ENCODE measurements at regions of chr1 and their contacts with region 1.

Region 1: GRCh38 chr1:224356685-224357625 is at the start of gene CNIH4:
- DNase-seq: peak; percentile 96
- H3K27ac ChIP-seq: peak within 1 kb of the TSS; percentile 89
- CTCF ChIP-seq: no peak

Region 2: DNA sequence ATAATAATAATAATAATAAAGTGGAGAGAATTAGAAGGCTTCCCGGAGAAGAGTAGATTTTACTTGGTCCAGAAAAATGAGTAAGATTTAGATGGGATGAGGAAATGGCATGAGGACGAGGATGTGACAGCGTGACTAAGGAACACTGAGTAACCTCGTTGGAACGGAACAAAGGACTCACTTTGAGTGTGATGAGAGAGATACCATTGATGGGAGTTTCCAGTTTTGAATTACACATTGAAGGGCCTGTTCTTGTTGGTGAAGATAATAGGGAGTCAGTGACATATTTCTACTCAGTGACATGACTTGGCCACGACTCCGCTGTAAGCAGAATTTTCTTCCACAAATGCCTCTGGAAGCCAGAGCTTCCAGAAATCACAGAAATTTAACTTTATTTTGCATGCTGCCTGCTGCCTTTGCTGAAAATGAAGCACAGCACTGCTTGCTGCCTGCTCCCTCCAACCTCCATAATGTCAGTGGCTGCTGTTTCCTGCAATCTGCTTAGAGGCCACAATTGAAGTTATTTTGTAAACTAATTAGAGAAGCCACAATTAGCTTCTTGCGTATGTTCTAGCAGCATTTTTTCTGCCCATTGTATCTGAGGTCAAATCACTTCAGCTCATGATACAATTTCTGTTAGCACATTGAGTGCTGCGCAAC is 276.7 kb before region 1 on chr1:
- CTCF ChIA-PET with region 1: no interaction called
- POLR2A ChIA-PET with region 1: no interaction called
- DNase-seq: no peak
- H3K27ac ChIP-seq: no peak overlapping the region
- CTCF ChIP-seq: no peak

Region 3: GRCh38 chr1:224338150-224338838 is 18.7 kb before region 1 on chr1:
- CTCF ChIA-PET with region 1: no interaction called
- POLR2A ChIA-PET with region 1: no interaction called
- DNase-seq: no peak
- H3K27ac ChIP-seq: no peak overlapping the region
- CTCF ChIP-seq: no peak

Region 4: DNA sequence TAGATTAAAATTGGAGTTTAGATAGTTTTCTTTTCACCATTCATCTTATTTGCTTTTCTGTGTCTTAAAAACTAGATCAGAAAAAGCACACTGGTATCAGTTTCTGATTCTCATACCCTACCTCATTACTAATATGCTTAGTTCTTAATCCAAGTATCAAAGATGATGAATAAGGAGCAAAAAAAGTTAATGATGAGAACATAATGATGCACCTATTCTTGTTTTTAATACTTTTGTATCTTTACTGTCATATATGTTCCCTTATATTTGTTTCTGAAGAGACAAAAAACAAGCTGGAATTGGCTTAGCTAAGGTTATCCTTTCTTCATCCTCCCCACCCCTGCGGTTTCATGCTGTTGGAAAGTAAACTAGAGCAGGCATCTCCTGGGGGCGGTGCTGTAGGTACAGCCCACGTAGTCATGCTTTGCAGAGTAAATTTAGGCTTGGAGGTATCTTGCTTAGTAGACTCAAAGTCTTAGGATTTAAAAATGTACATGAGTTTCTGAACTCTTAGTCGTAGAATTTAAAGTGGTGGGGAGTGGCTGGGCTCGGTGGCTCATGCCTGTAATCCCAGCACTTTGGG is 16.1 kb after region 1 on chr1:
- CTCF ChIA-PET with region 1: no interaction called
- POLR2A ChIA-PET with region 1: interaction called, 13 read pairs
- DNase-seq: no peak
- H3K27ac ChIP-seq: no peak overlapping the region
- CTCF ChIP-seq: no peak